Right lobe of liver (tissue), 6 donors: ENCODE measurements at regions of chr14 and their contacts with region 1.

Region 1: DNA sequence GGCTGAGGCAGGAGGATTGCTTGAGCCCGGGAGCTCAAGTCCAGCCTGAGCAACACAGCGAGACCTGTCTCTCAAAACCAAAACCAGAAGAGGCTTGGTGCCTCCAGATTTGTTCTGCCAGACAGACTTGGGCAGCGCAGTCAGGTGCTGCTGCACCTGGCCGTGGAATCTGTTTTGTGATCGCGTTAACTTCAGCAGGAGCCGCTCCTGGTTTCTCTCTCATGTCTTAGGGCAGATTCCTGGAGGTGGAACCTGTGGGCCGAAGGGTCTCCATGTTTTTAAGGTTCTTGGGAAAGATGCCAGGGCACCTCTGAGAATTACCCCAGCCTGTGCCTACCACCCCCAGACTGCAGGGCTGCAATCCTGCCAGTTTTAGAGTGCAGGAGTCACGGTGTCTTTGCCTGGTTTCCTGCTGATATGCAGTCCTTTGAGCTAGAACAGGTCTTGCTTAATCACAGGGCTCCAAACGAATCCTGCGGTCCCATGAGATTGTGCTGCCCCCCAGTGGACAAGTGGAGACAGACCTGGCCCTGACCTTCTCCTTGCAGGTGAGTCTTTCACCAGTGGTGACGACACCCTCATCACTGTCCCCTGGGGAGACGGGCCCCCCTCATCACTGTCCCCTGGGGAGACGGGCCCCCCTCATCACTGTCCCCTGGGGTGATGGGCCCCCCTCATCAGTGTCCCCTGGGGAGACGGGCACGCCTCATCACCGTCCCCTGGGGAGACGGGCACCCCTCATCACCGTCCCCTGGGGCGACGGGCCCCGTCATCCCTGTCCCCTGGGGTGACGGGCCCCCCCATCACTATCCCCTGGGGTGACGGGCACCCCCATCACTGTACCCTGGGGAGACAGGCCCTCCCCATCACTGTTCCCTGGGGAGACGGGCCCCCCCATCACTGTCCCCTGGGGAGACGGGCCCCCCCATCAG is 37.6 kb downstream of the PACS2 start:
- DNase-seq: peak; percentile 82 to 91 (median 87)
- ATAC-seq: peak; percentile 95 to 99 (median 98)
- H3K4me3 ChIP-seq: no peak overlapping the region
- H3K27ac ChIP-seq: peak overlapping the region in 1 of 3 donors; percentile 26
- H3K4me1 ChIP-seq: peaks cover 0 to 6% (median 3%) of the 10 kb centered on the region in 4 donors
- H3K27me3 ChIP-seq: no peaks in the 10 kb centered on the region
- CTCF ChIP-seq: peak; percentile 86 to 94 (median 90)
- POLR2A ChIP-seq: no peak

Region 2: GRCh38 chr14:105086833-105087307 is 265.3 kb before region 1 on chr14:
- intact Hi-C with region 1: loop called (anchors 10 kb)
- DNase-seq: peak; percentile 73 to 84 (median 81)
- ATAC-seq: peak; percentile 40 to 62 (median 58)
- H3K4me3 ChIP-seq: peak overlapping the region; percentile 12 to 32 (median 31)
- H3K27ac ChIP-seq: no peak overlapping the region
- H3K4me1 ChIP-seq: peaks cover 2 to 19% (median 10%) of the 10 kb centered on the region in 4 donors
- H3K27me3 ChIP-seq: peaks cover 0 to 9% of the 10 kb centered on the region in 2 donors
- CTCF ChIP-seq: peak; percentile 79 to 83 (median 80)
- POLR2A ChIP-seq: no peak

Region 3: GRCh38 chr14:105203057-105203531 is 149.1 kb before region 1 on chr14:
- intact Hi-C with region 1: loop called (anchors 5 kb)
- DNase-seq: peak; percentile 75 to 83 (median 82)
- ATAC-seq: peak; percentile 46 to 58 (median 50)
- H3K4me3 ChIP-seq: no peak overlapping the region
- H3K27ac ChIP-seq: no peak overlapping the region
- H3K4me1 ChIP-seq: peaks cover 0 to 22% (median 8%) of the 10 kb centered on the region in 4 donors
- H3K27me3 ChIP-seq: no peaks in the 10 kb centered on the region
- CTCF ChIP-seq: peak; percentile 90 to 96 (median 93)
- POLR2A ChIP-seq: no peak

Region 4: GRCh38 chr14:105300792-105301533 is 51.2 kb before region 1 on chr14 and contains the start of gene BRF1:
- intact Hi-C with region 1: no loop called
- DNase-seq: peak; percentile 99 to 100 (median 100)
- ATAC-seq: peak; percentile 95 to 96 (median 96)
- H3K4me3 ChIP-seq: peak within 1 kb of the TSS; percentile 55 to 96 (median 77)
- H3K27ac ChIP-seq: peak within 1 kb of the TSS; percentile 36 to 89 (median 80)
- H3K4me1 ChIP-seq: peaks cover 0 to 17% (median 7%) of the 10 kb centered on the region in 4 donors
- H3K27me3 ChIP-seq: no peaks in the 10 kb centered on the region
- CTCF ChIP-seq: no peak
- POLR2A ChIP-seq: peak; percentile 87
- total RNA-seq, gene BRF1: 13.1 to 17.8 (median 16.2) TPM